Vagina (tissue), 2 donors: ENCODE measurements at regions of chrX and their contacts with region 1.

Region 1: DNA sequence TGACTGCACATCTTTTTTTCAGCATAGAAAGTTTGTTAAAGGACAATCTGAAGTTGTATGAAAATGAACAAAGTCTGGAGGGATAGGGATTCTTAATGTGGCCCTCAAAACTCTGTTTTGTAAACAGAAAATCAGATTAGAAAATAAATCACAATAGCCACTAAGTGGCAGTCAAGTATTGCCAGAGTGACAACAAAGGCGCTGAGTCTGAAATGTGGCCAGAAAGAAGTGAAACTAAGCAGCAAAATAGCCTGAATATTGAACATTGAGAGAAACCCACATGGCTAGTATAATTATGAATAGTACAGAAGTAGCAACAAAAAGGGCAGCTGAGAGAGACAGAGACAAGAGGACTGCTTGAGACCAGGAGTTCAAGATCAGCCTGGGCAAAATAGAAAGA is 81.1 kb upstream of the CT45A1 start:
- DNase-seq: no peak
- H3K4me3 ChIP-seq: no peak overlapping the region
- H3K27ac ChIP-seq: no peak overlapping the region
- H3K4me1 ChIP-seq: no peaks in the 10 kb centered on the region
- H3K27me3 ChIP-seq: no peaks in the 10 kb centered on the region
- CTCF ChIP-seq: no peak
- POLR2A ChIP-seq: no peak

Region 2: GRCh38 chrX:134572816-134573682 is 1059.3 kb before region 1 on chrX:
- intact Hi-C with region 1: loop called (anchors 10 kb)
- DNase-seq: no peak
- H3K4me3 ChIP-seq: no peak overlapping the region
- H3K27ac ChIP-seq: no peak overlapping the region
- H3K4me1 ChIP-seq: no peaks in the 10 kb centered on the region
- H3K27me3 ChIP-seq: no peaks in the 10 kb centered on the region
- CTCF ChIP-seq: no peak
- POLR2A ChIP-seq: no peak